ENCODE measurements at regions of chr5 and their contacts with region 1.

Region 1: GRCh38 chr5:132064738-132065331 is 4.4 kb downstream of the IL3 start:
- DNase-seq: peak; percentile 71
- ATAC-seq: peak; percentile 86
- H3K4me3 ChIP-seq: no peak overlapping the region
- H3K27ac ChIP-seq: peak overlapping the region; percentile 8; the same call in 1 of the 2 replicates
- H3K4me1 ChIP-seq: peaks cover 0 to 4% of the 10 kb centered on the region in 2 experiments; a peak in 1 of 4 replicates
- H3K27me3 ChIP-seq: no peaks in the 10 kb centered on the region
- CTCF ChIP-seq: peak; percentile 75 to 98 (median 93)
- POLR2A ChIP-seq: no peak
- RAD21 ChIP-seq: peak; percentile 78

Region 2: DNA sequence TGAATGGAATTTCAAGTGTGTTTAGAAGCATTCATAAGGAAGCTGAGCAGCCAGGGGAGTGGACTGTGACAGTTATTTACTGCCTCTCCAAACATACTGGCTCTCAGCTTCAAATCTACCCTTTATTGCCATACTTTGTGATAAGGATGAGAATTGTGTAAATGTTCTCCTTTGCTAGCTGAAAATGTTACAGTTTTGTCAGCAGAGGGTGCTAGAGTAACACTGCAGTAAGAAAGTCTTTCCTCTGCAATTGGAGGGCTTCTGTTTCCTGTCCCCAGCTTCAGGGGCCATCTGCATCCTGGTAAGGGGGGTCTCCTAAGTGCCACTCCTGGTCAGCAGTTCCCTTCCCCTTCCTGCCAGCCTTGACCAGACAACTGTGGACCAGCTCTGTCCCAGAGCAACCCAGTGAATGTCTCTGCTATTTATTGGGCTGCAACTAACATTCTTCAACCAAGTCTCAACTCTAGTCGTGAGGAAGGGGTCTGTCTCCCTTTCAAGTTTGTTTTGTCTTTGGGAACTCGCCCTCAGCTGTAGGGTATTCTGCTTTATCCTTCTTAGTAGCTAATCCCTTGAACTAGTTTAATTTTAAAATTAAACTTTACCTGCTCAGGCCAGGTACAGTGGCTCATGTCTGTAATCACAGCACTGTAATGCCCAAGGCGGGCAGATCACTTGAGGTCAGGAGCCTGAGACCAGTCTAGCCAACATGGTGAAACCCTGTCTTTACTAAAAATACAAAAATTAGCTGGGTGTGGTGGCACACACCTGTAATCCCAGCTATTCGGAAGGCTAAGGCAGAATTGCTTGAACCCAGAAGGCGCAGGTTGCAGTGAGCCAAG is 475.1 kb before region 1 on chr5:
- CTCF ChIA-PET with region 1: interaction called, 15 read pairs
- POLR2A ChIA-PET with region 1: no interaction called
- RAD21 ChIA-PET with region 1: no interaction called
- intact Hi-C with region 1: loop called (anchors 1 kb)
- DNase-seq: peak; percentile 34
- ATAC-seq: peak; percentile 79
- H3K4me3 ChIP-seq: no peak overlapping the region
- H3K27ac ChIP-seq: no peak overlapping the region
- H3K4me1 ChIP-seq: peaks cover 0 to 16% of the 10 kb centered on the region in 2 experiments; a peak in 2 of 4 replicates
- H3K27me3 ChIP-seq: no peaks in the 10 kb centered on the region
- CTCF ChIP-seq: peak; percentile 69 to 87 (median 79); a peak in 5 of 6 replicates
- POLR2A ChIP-seq: no peak
- RAD21 ChIP-seq: peak; percentile 86

Region 3: GRCh38 chr5:132134384-132134783 is 69.5 kb after region 1 on chr5:
- CTCF ChIA-PET with region 1: no interaction called
- POLR2A ChIA-PET with region 1: no interaction called
- RAD21 ChIA-PET with region 1: interaction called in 1 of 2 experiments, 3 read pairs
- intact Hi-C with region 1: loop called (anchors 1 kb)
- DNase-seq: peak; percentile 8
- ATAC-seq: peak; percentile 85
- H3K4me3 ChIP-seq: no peak overlapping the region
- H3K27ac ChIP-seq: no peak overlapping the region
- H3K4me1 ChIP-seq: no peaks in the 10 kb centered on the region
- H3K27me3 ChIP-seq: no peaks in the 10 kb centered on the region
- CTCF ChIP-seq: peak; percentile 35 to 57 (median 43); a peak in 5 of 6 replicates
- POLR2A ChIP-seq: no peak
- RAD21 ChIP-seq: peak; percentile 61

Region 4: GRCh38 chr5:132190161-132190817 is 125.5 kb after region 1 on chr5:
- CTCF ChIA-PET with region 1: interaction called, 6 read pairs
- POLR2A ChIA-PET with region 1: no interaction called
- RAD21 ChIA-PET with region 1: no interaction called
- intact Hi-C with region 1: loop called (anchors 1 kb)
- DNase-seq: peak; percentile 51
- ATAC-seq: peak; percentile 100
- H3K4me3 ChIP-seq: no peak overlapping the region
- H3K27ac ChIP-seq: no peak overlapping the region
- H3K4me1 ChIP-seq: no peaks in the 10 kb centered on the region
- H3K27me3 ChIP-seq: no peaks in the 10 kb centered on the region
- CTCF ChIP-seq: peak; percentile 52 to 84 (median 83); a peak in 5 of 6 replicates
- POLR2A ChIP-seq: no peak
- RAD21 ChIP-seq: peak; percentile 64

Region 5: DNA sequence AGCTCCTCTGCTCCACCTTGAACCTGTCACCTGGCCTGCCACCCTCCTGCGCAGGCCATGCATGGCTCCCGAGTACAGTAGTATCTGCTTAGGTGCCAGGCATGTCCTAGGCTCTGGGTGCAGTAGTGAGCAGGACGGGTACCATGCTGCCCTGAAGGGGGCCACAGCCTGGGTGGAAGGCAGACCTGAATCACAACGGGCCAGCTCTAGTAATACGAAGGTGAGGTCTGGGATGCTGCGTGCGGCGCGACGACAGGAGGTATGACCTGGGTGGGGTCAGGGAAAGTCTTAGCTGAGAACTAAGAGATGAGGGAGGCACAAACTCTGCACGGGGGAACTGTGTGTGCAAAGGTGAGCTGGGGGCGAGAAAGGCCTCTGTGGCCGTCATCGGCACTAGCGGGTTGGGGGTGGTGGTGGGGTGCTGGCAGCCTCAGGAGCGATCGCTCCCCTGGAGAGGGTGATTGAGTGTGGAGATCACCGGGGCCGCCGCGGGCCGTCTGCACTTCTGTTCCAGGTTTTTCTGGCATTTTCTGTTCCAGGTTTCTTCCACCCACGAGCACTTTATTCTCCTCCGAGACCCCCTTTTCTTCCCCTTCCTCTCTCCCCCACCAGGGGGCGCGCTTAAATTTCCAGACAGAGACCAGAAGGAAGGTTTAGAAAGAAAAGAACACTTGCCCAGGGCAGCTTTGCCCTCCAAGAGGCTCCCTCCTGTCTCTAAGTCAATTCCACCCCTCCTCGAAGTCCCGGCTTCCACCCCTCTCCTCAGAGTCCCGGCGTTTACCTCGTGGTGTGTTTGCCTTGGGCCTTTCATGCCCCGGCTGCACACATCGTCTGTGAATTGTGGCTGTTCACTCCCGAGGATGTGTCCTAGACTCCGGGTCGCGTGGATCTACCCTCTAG is 207.7 kb after region 1 on chr5:
- CTCF ChIA-PET with region 1: no interaction called
- POLR2A ChIA-PET with region 1: no interaction called
- RAD21 ChIA-PET with region 1: no interaction called
- intact Hi-C with region 1: loop called (anchors 10 kb)
- DNase-seq: no peak
- ATAC-seq: peak; percentile 80
- H3K4me3 ChIP-seq: no peak overlapping the region
- H3K27ac ChIP-seq: no peak overlapping the region
- H3K4me1 ChIP-seq: peaks cover 0 to 9% of the 10 kb centered on the region in 2 experiments; a peak in 2 of 4 replicates
- H3K27me3 ChIP-seq: no peaks in the 10 kb centered on the region
- CTCF ChIP-seq: peak; percentile 80 to 90 (median 86)
- POLR2A ChIP-seq: no peak
- RAD21 ChIP-seq: peak; percentile 78

Region 6: GRCh38 chr5:132500931-132501630 is 436.2 kb after region 1 on chr5:
- CTCF ChIA-PET with region 1: interaction called, 3 read pairs
- POLR2A ChIA-PET with region 1: no interaction called
- RAD21 ChIA-PET with region 1: no interaction called
- intact Hi-C with region 1: loop called (anchors 5 kb)
- DNase-seq: no peak
- ATAC-seq: no peak
- H3K4me3 ChIP-seq: no peak overlapping the region
- H3K27ac ChIP-seq: no peak overlapping the region; the same call in 1 of the 2 replicates
- H3K4me1 ChIP-seq: peaks cover 15 to 64% of the 10 kb centered on the region in 2 experiments
- H3K27me3 ChIP-seq: no peaks in the 10 kb centered on the region
- CTCF ChIP-seq: peak in 2 of 3 experiments; percentile 78 to 96; a peak in 4 of 6 replicates
- POLR2A ChIP-seq: no peak
- RAD21 ChIP-seq: no peak